ENCODE measurements at regions of chr2 and their contacts with region 1.

Region 1: DNA sequence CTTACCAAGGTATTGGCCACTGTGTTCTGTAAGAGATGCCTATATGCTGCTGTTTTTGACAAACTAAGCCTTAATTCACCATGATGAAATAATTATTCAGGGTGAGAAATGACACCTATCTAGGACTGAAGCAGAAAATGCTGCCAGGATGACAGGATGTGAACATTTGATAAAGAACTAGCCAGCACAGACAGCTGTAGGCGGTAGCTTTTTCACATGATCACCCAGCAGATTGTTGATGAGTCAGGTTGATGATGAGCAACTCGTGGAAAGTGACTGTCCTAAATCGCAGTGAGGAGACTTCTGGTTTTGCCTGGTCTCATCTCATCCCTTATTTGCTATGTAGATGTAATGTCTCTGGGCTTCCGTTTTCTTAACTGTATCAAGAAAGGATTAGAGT is 144.1 kb downstream of the PRPF40A start:
- DNase-seq: peak; percentile 35
- H3K4me3 Mint-ChIP-seq: no peak overlapping the region
- H3K27ac Mint-ChIP-seq: peak overlapping the region; percentile 11
- H3K4me1 Mint-ChIP-seq: peaks cover 17% of the 10 kb centered on the region
- H3K27me3 Mint-ChIP-seq: peaks cover 2% of the 10 kb centered on the region

Region 2: DNA sequence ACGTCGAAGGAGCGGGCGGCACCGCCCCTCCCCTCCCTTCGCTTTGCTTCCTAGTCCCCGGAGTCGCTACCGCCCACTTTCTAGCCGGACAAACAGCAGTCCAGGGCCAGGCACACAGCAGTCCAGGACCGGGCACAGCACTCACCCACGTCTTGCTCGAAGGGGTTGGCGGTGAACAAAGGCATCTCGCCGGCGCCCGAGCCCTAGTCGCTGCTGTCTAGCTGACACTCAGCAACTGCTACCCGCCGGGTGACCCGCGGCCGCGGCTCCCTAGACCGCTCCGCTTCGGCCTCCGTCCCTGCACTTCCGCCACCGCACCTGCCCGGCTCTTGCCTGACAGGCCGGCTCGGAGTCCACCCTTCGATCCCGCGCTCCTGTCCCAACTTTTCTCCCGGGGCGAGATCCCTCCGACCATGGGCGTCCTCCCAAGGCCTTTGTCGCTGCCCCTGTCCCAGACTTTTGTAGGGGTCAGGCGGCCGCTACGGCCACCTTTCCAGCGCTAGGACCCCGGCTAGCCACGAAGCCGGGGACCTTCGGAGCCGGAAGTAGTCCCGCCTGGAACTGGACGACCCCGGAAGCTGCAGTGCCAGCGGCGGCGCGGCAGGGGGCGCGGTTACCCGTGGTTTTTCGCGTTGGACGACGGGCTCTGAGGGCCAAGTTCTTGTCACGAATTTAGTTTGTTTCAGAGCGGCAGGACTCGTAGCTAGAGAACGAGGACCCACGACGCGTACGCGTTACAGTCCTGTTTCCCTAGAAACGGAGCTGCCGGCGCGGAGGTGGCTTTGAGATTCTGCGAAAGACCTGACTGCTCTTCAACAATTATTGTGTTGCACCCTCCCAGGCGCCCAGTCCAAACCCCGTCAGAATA is 397.5 kb before region 1 on chr2 and contains the start of gene STAM2:
- intact Hi-C with region 1: loop called (anchors 1 kb)
- DNase-seq: peak; percentile 91
- H3K4me3 Mint-ChIP-seq: peak within 1 kb of the TSS; percentile 92
- H3K27ac Mint-ChIP-seq: peak within 1 kb of the TSS; percentile 96
- H3K4me1 Mint-ChIP-seq: peaks cover 29% of the 10 kb centered on the region
- H3K27me3 Mint-ChIP-seq: peaks cover 2% of the 10 kb centered on the region
- total RNA-seq, gene STAM2: 14.3 and 15.9 TPM in 2 replicates

Region 3: DNA sequence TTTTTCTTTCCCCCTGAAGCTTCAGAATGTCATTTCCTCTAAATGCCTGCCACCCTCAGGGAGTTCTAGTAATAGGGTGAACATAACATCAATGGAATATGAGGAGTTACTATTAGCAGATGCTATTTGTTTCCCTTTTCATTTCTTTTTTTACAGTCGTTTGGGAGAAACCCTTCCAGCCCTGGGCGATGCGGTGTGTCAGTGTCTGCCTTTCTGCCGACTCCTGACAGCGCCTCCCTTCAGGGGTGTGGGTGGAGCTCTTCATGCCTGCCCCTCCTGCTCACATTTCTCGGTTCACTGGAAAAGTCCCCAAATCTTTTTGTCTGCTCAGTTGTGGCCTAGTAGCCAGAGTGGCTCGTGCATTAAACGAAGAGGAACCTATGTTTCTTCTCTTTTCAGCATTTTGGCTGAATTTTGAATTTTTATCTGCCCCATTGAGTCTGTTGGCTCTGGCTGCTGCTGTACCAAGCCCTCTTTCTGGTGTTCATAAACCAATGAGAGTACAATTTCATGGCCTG is 165.9 kb before region 1 on chr2:
- intact Hi-C with region 1: loop called (anchors 1 kb)
- DNase-seq: no peak
- H3K4me3 Mint-ChIP-seq: peak overlapping the region; percentile 67
- H3K27ac Mint-ChIP-seq: peak overlapping the region; percentile 84
- H3K4me1 Mint-ChIP-seq: peaks cover 74% of the 10 kb centered on the region
- H3K27me3 Mint-ChIP-seq: no peaks in the 10 kb centered on the region

Region 4: DNA sequence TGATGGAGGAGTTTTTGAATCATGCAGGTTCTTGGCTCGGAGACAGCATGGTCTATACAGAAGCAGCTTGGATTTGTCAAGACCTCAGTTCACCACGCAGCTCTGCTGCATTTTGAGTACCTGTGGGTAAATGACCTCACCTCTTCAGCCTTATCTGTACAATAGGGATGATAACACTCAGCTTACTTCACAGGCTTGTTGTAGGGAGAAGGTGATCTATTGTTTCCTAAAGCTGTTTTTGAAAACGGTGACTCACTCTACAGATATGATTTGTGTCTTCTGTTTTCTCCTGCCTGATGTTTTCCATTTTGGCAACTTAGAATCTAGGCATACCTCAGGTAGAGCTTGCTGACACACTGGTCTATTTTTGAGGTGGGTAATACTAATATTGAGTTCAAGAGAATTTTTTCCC is 157.9 kb before region 1 on chr2:
- intact Hi-C with region 1: loop called (anchors 1 kb)
- DNase-seq: no peak
- H3K4me3 Mint-ChIP-seq: peak overlapping the region; percentile 8
- H3K27ac Mint-ChIP-seq: peak overlapping the region; percentile 88
- H3K4me1 Mint-ChIP-seq: peaks cover 53% of the 10 kb centered on the region
- H3K27me3 Mint-ChIP-seq: peaks cover 2% of the 10 kb centered on the region

Region 5: DNA sequence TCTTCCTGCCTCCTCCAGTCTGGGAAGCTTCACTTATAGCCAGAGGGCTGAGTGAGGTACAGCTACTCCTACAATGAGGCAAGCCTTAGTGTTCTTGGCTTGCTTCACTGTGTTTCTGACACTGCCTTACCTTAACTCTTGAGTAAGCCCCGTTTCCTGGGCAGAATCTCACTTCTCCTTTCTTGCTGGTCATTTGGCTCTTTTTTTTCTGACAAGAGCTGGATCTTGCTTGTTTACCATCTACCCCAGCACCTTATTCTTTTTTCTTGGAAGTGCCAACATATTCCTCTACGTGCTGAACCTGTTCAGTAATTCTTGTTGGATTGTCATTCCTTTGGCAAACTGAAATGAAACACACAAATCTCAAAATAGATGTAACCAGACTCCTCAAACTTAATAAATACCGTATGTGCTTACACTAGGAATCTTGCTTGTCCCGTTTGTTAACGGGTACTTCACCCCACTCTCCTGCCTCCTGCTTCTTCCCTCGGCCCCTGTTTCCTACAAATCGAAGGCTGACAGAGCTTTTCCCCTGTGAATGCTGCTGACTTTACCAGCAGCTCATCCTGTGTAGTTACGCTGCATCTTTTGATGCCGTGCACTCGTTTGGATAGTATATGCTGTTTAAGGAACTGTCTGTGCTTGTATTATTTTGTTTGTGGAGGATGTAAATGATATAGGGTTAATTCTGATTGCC is 106.0 kb before region 1 on chr2:
- intact Hi-C with region 1: no loop called
- DNase-seq: no peak
- H3K4me3 Mint-ChIP-seq: no peak overlapping the region
- H3K27ac Mint-ChIP-seq: no peak overlapping the region
- H3K4me1 Mint-ChIP-seq: peaks cover 13% of the 10 kb centered on the region
- H3K27me3 Mint-ChIP-seq: peaks cover 18% of the 10 kb centered on the region

Region 6: GRCh38 chr2:152505495-152505906 is 67.7 kb before region 1 on chr2:
- intact Hi-C with region 1: loop called (anchors 2 kb)
- DNase-seq: no peak
- H3K4me3 Mint-ChIP-seq: no peak overlapping the region
- H3K27ac Mint-ChIP-seq: no peak overlapping the region
- H3K4me1 Mint-ChIP-seq: peaks cover 27% of the 10 kb centered on the region
- H3K27me3 Mint-ChIP-seq: no peaks in the 10 kb centered on the region

Region 7: DNA sequence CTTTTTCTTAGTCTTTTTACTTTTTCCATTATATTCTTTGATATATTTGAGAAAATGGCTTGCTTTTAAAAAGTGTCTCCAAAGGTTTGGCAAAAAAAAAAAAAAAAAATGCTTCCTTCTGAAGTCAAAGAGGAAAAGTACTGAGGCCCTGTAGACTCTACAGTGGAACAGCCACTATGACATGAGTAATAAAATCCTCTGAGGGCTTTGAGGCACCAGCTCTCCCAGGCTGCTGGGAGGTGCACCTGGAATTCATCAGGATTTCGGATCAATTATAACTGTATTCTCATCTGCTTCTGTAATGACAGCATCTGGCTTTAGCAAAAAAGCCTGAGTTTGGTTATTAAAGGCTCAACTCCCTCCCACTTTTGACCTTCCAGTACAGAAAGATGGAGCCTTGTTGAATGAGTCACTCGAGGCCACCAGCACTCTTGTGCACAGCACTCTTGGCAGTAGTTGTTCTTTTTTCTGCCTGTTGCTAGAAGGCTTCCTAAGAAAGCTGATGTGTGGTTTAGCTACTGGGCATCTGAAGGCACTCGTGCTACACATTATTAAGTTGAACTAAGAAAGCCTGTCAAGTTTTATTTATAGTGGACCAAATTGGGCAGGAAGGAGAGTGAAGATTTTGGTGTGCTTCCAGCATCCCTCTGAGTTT is 12.8 kb after region 1 on chr2:
- intact Hi-C with region 1: loop called (anchors 2 kb)
- DNase-seq: no peak
- H3K4me3 Mint-ChIP-seq: no peak overlapping the region
- H3K27ac Mint-ChIP-seq: no peak overlapping the region
- H3K4me1 Mint-ChIP-seq: peaks cover 25% of the 10 kb centered on the region
- H3K27me3 Mint-ChIP-seq: peaks cover 2% of the 10 kb centered on the region

Region 8: DNA sequence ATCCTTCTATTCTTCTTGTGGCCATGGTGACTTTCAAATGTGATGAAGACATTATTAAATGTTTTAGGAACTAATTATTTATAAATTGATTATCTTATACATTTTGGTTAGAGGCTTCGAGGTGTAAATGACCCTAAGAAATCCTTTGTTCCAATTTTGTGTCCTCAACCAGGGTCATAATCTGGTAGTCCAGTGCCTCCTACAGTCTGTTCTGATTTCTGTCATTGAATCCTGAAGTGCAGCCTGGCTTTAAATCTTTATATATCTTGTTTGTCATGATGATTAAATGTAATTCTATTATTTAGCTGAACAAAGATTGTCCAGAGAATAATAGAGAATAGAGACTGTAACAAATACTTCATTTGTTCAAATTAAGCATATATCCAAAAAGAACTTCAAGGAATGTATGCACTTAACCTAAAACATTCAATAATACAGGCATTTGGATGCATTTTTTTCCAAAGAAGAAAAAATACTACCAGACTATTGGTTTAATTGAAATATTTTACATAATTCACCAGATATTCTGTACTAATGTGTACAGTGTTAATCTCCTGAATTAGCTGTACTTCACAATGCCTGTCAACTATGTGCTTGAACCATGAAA is 54.3 kb after region 1 on chr2:
- intact Hi-C with region 1: loop called (anchors 5 kb)
- DNase-seq: no peak
- H3K4me3 Mint-ChIP-seq: no peak overlapping the region
- H3K27ac Mint-ChIP-seq: no peak overlapping the region
- H3K4me1 Mint-ChIP-seq: peaks cover 23% of the 10 kb centered on the region
- H3K27me3 Mint-ChIP-seq: peaks cover 3% of the 10 kb centered on the region

Region 9: GRCh38 chr2:152682663-152683062 is 109.5 kb after region 1 on chr2:
- intact Hi-C with region 1: no loop called
- DNase-seq: no peak
- H3K4me3 Mint-ChIP-seq: no peak overlapping the region
- H3K27ac Mint-ChIP-seq: no peak overlapping the region
- H3K4me1 Mint-ChIP-seq: peaks cover 24% of the 10 kb centered on the region
- H3K27me3 Mint-ChIP-seq: no peaks in the 10 kb centered on the region